ENCODE measurements at regions of chr21 and their contacts with region 1.

Region 1: GRCh38 chr21:36255663-36256062 is 64.3 kb upstream of the MORC3 start:
- DNase-seq: peak; percentile 63
- ATAC-seq: peak; percentile 85
- H3K4me3 ChIP-seq: peak overlapping the region; percentile 45; the same call in 1 of the 2 replicates
- H3K27ac ChIP-seq: peak overlapping the region; percentile 63
- H3K4me1 ChIP-seq: peaks cover 24% of the 10 kb centered on the region
- H3K27me3 ChIP-seq: no peaks in the 10 kb centered on the region
- CTCF ChIP-seq: no peak
- EP300 ChIP-seq: no peak
- POLR2A ChIP-seq: no peak
- RAD21 ChIP-seq: peak; percentile 9; the same call in 1 of the 2 replicates

Region 2: DNA sequence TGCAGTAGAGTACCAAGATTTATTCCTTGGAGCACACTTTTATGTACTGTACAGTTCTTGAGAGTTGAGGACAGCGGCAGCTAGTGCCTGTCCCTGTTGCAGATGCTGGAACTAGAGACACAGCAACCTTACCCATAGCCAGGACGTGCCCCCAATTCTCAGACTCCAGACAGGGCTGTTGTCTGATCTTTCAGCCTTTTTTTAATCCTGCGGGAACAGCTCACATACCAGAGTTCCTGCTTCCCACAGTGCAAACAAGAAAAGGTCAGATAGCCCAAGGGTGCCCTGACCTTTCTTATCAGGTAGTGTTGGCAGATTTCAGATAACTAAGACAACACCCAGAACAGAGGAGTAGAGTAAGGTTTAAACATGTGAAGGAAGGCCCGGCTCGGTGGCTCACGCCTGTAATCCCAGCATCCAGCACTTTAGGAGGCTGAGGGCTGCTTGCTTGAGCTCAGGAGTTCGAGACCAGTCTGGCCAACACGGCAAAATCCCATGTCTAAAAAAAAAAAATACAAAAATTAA is 20.5 kb before region 1 on chr21:
- CTCF ChIA-PET with region 1: interaction called, 3 read pairs
- POLR2A ChIA-PET with region 1: interaction called, 6 read pairs
- RAD21 ChIA-PET with region 1: interaction called, 10 read pairs
- SMC1A ChIA-PET with region 1: interaction called, 9 read pairs
- in situ Hi-C with region 1: no loop called
- intact Hi-C with region 1: loop called (anchors 1 kb)
- DNase-seq: no peak
- ATAC-seq: no peak
- H3K4me3 ChIP-seq: no peak overlapping the region
- H3K27ac ChIP-seq: no peak overlapping the region
- H3K4me1 ChIP-seq: peaks cover 6% of the 10 kb centered on the region
- H3K27me3 ChIP-seq: no peaks in the 10 kb centered on the region
- CTCF ChIP-seq: no peak
- EP300 ChIP-seq: no peak
- POLR2A ChIP-seq: no peak
- RAD21 ChIP-seq: no peak

Region 3: DNA sequence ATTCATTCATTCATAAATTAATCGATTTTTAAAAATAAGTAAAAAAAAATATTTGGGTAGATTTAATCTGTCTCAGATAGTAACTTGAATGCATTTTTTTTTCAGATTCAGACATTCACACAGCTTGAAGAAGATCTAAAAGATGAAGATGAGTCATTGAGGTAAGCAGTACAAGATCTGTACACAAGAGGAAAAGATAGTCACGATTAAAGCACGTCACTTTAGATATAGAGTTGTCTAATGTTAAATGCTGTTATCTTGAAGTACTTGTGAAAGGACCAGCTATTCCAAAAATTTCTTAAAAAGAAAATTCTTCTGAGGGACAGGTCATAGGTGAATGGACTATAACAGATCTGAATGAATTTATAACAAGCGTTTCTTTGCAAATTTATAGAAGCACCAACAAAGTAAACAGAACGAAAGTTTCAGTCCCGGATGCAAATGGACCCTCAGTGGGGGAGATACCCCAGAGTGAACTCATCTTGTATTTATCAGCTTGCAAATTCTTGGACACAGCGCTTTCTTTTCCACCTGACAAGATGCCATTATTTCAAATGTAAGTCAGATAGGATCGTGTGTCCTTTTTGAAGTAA is 33.1 kb after region 1 on chr21:
- CTCF ChIA-PET with region 1: interaction called, 4 read pairs
- POLR2A ChIA-PET with region 1: interaction called, 6 read pairs
- RAD21 ChIA-PET with region 1: interaction called, 9 read pairs
- SMC1A ChIA-PET with region 1: interaction called, 9 read pairs
- in situ Hi-C with region 1: no loop called
- intact Hi-C with region 1: loop called (anchors 2 kb)
- DNase-seq: no peak
- ATAC-seq: peak; percentile 59
- H3K4me3 ChIP-seq: peak overlapping the region; percentile 37; the same call in 1 of the 2 replicates
- H3K27ac ChIP-seq: peak overlapping the region; percentile 35
- H3K4me1 ChIP-seq: peaks cover 16% of the 10 kb centered on the region
- H3K27me3 ChIP-seq: no peaks in the 10 kb centered on the region
- CTCF ChIP-seq: no peak
- EP300 ChIP-seq: no peak
- POLR2A ChIP-seq: no peak
- RAD21 ChIP-seq: no peak

Region 4: GRCh38 chr21:36297921-36298594 is 42.4 kb after region 1 on chr21:
- CTCF ChIA-PET with region 1: interaction called, 4 read pairs
- POLR2A ChIA-PET with region 1: interaction called, 4 read pairs
- RAD21 ChIA-PET with region 1: interaction called, 14 read pairs
- SMC1A ChIA-PET with region 1: interaction called, 10 read pairs
- in situ Hi-C with region 1: no loop called
- intact Hi-C with region 1: no loop called
- DNase-seq: peak; percentile 85
- ATAC-seq: peak; percentile 99
- H3K4me3 ChIP-seq: peak overlapping the region; percentile 33; the same call in 1 of the 2 replicates
- H3K27ac ChIP-seq: peak overlapping the region; percentile 94
- H3K4me1 ChIP-seq: peaks cover 32% of the 10 kb centered on the region
- H3K27me3 ChIP-seq: no peaks in the 10 kb centered on the region
- CTCF ChIP-seq: no peak
- EP300 ChIP-seq: no peak
- POLR2A ChIP-seq: peak; percentile 69
- RAD21 ChIP-seq: no peak; the same call in 1 of the 2 replicates

Measured in GM12878 (cell line).